ENCODE measurements at regions of chr1 and their contacts with region 1.

Region 1: GRCh38 chr1:31663622-31664452 is 19.2 kb upstream of the PEF1 start:
- DNase-seq: peak in 1 of 2 donors; percentile 59
- H3K4me3 ChIP-seq: no peak overlapping the region
- H3K27ac ChIP-seq: peak overlapping the region in 1 of 2 donors; percentile 49
- H3K4me1 ChIP-seq: peaks cover 0 to 38% (median 32%) of the 10 kb centered on the region in 4 donors
- H3K27me3 ChIP-seq: no peaks in the 10 kb centered on the region
- CTCF ChIP-seq: peak; percentile 90 to 97

Region 2: DNA sequence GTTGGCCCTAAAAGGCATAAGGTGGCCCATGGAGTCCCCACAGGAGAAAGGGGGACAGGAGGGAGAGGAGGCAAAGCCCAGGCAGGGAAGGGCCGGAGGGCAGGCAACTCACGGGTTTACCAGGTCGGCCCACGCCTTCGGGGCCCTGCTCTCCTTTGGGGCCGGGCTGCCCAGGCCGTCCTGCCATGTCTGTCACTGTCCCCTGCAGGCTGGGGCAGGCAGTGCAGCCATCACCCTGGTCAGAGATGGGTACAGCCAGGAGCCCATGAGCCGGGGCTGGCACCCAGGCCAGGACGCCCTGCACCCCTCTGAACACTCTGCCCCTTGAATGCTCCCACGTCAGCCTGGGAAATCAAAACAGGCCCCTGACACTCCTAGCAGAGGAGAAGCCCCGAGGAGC is 20.2 kb after region 1 on chr1:
- intact Hi-C with region 1: no loop called
- DNase-seq: no peak
- H3K4me3 ChIP-seq: no peak overlapping the region
- H3K27ac ChIP-seq: peak overlapping the region in 1 of 2 donors; percentile 21
- H3K4me1 ChIP-seq: peaks cover 0 to 5% (median 2%) of the 10 kb centered on the region in 4 donors
- H3K27me3 ChIP-seq: no peaks in the 10 kb centered on the region
- CTCF ChIP-seq: peak in 1 of 2 experiments; percentile 13

Region 3: DNA sequence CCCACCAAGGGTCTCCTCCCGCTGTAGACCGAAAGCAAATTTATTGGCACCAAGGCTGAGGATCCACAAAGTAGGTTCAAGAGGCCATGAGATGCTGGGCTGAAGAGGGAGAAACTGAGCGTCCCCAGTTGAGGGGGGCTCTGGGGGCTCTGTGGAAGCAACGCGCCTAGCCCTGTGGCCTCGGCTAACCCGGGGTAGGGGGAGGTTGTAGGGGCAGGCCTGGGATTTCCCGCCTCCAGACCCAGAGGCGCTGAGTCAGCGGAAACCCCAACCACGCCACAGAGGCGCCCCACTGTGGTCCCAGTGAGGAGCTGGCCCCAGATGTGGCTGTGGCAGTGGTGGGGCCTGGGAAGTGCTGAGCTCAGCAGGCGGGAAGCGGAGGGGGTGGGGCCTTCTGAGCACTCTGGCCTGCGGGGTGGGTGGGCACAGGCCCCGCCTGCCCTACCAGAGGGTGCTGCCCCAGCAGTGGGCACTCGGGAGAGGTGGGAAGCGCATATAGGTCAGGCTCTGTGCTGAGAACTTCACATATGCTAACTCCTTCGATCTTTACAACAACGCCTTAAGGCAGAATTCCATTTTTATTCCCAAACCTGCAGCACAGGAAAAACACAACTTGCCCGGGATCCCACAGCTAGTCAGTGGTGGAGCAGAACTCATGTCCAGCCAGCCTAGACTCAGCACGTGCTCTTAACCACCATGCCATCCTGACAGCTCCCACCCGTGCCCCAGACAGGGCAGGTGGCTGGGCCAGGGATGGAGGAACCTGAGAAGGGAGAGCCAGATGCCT is 41.4 kb after region 1 on chr1:
- intact Hi-C with region 1: loop called (anchors 5 kb)
- DNase-seq: peak; percentile 56 to 83
- H3K4me3 ChIP-seq: peak overlapping the region; percentile 54 to 62
- H3K27ac ChIP-seq: peak overlapping the region; percentile 83
- H3K4me1 ChIP-seq: peaks cover 4 to 66% (median 54%) of the 10 kb centered on the region in 4 donors
- H3K27me3 ChIP-seq: no peaks in the 10 kb centered on the region
- CTCF ChIP-seq: peak; percentile 35 to 57

Region 4: DNA sequence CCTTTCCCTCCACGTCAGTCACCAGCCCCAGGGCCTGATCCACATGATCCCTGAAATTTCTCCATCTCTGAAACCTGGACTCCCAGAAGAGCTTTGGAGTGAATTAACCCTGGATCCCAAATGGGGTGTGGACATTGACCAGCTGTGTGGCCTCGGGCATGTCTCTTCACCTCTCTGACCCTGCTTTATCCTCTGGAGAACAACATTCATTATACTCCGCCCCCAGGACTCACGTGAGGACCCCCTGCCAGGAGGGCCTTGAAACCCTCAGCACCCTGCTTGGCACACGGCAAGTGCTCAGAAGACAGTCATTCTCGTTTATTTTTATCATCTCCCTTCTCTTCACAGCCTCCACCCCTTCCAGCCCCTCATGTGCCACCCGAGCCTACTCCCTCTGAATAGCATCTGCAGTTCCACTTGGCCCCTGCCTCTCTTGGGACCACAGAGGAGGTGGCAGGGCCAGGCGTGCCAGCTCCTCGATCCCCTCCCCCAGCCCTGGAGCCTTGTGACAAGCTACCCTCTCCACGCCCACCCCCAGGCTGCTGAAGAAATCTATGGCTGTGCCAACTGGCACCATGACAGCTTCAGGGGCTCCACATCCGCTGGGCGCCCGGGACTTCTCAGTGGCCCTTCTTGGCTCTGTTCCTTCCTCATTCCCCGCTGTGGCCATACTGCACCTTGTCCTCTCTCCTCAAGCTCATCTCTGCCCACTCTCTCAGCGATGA is 82.3 kb after region 1 on chr1:
- intact Hi-C with region 1: loop called (anchors 2 kb)
- DNase-seq: no peak
- H3K4me3 ChIP-seq: no peak overlapping the region
- H3K27ac ChIP-seq: no peak overlapping the region
- H3K4me1 ChIP-seq: peaks cover 0 to 10% (median 4%) of the 10 kb centered on the region in 4 donors
- H3K27me3 ChIP-seq: no peaks in the 10 kb centered on the region
- CTCF ChIP-seq: no peak

Region 5: GRCh38 chr1:31789259-31790065 is 125.6 kb after region 1 on chr1:
- intact Hi-C with region 1: loop called (anchors 2 kb)
- DNase-seq: peak; percentile 96 to 97
- H3K4me3 ChIP-seq: peak overlapping the region; percentile 52 to 72
- H3K27ac ChIP-seq: peak overlapping the region; percentile 72 to 78
- H3K4me1 ChIP-seq: peaks cover 0 to 13% (median 6%) of the 10 kb centered on the region in 4 donors
- H3K27me3 ChIP-seq: peaks cover 0 to 11% of the 10 kb centered on the region in 2 donors
- CTCF ChIP-seq: peak; percentile 90 to 91

Region 6: GRCh38 chr1:31959521-31960340 is 295.9 kb after region 1 on chr1:
- intact Hi-C with region 1: loop called (anchors 10 kb)
- DNase-seq: peak in 1 of 2 donors; percentile 52
- H3K4me3 ChIP-seq: no peak overlapping the region
- H3K27ac ChIP-seq: no peak overlapping the region
- H3K4me1 ChIP-seq: peaks cover 10 to 23% (median 15%) of the 10 kb centered on the region in 4 donors
- H3K27me3 ChIP-seq: no peaks in the 10 kb centered on the region
- CTCF ChIP-seq: no peak

Region 7: GRCh38 chr1:32072622-32073298 is 408.9 kb after region 1 on chr1 and contains the start of gene TMEM39B:
- intact Hi-C with region 1: loop called (anchors 10 kb)
- DNase-seq: peak; percentile 96 to 97
- H3K4me3 ChIP-seq: peak within 1 kb of the TSS; percentile 66 to 72
- H3K27ac ChIP-seq: peak within 1 kb of the TSS; percentile 84 to 89
- H3K4me1 ChIP-seq: peaks cover 0 to 29% (median 21%) of the 10 kb centered on the region in 4 donors
- H3K27me3 ChIP-seq: no peaks in the 10 kb centered on the region
- CTCF ChIP-seq: peak; percentile 23 to 36